PC-9 (cell line): ENCODE measurements at regions of chr20 and their contacts with region 1.

Region 1: GRCh38 chr20:60300387-60300786 is 342.2 kb downstream of the CDH26 start:
- DNase-seq: no peak
- H3K4me3 ChIP-seq: no peak overlapping the region
- H3K27ac ChIP-seq: no peak overlapping the region
- H3K4me1 ChIP-seq: no peaks in the 10 kb centered on the region
- H3K27me3 ChIP-seq: peaks cover 86% of the 10 kb centered on the region
- CTCF ChIP-seq: no peak

Region 2: GRCh38 chr20:59632456-59633113 is 667.8 kb before region 1 on chr20:
- CTCF ChIA-PET with region 1: no interaction called
- POLR2A ChIA-PET with region 1: no interaction called
- intact Hi-C with region 1: loop called (anchors 5 kb)
- DNase-seq: no peak
- H3K4me3 ChIP-seq: no peak overlapping the region
- H3K27ac ChIP-seq: no peak overlapping the region
- H3K4me1 ChIP-seq: no peaks in the 10 kb centered on the region
- H3K27me3 ChIP-seq: peaks cover 94% of the 10 kb centered on the region
- CTCF ChIP-seq: no peak

Region 3: DNA sequence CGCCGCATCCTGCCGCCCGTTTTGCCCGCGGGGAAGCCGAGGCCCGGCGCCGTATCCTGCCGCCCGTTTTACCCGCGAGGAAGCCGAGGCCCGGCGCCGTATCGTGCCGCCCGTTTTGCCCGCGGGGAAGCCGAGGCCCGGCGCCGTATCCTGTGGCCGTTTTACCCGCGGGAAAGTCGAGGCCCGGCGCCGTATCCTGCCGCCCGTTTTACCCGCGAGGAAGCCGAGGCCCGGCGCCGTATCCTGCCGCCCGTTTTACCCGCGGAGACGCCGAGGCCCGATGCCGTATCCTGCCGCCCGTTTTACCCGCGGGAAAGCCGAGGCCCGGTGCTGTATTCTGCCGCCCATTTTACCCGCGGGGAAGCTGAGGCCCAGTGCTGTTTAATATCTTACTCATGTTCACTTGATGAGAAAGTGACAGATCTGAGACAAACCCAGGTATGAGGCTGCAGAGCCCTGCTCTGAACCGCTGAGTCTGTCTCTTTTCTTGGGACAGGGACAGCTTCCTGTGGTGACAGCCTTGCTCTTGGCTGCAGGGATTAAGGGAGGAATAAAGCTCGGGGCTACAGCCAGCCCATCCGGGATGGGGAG is 212.7 kb before region 1 on chr20:
- CTCF ChIA-PET with region 1: no interaction called
- POLR2A ChIA-PET with region 1: no interaction called
- intact Hi-C with region 1: no loop called
- DNase-seq: no peak
- H3K4me3 ChIP-seq: no peak overlapping the region
- H3K27ac ChIP-seq: no peak overlapping the region
- H3K4me1 ChIP-seq: no peaks in the 10 kb centered on the region
- H3K27me3 ChIP-seq: peaks cover 89% of the 10 kb centered on the region
- CTCF ChIP-seq: no peak